Ascending aorta (tissue), 2 donors: ENCODE measurements at regions of chr15 and their contacts with region 1.

Region 1: GRCh38 chr15:33132722-33133345 is 61.7 kb downstream of the FMN1 start:
- DNase-seq: no peak
- H3K4me3 ChIP-seq: no peak overlapping the region
- H3K27ac ChIP-seq: no peak overlapping the region
- H3K4me1 ChIP-seq: no peaks in the 10 kb centered on the region
- H3K27me3 ChIP-seq: no peaks in the 10 kb centered on the region
- CTCF ChIP-seq: peak; percentile 33 to 60 (median 37)

Region 2: DNA sequence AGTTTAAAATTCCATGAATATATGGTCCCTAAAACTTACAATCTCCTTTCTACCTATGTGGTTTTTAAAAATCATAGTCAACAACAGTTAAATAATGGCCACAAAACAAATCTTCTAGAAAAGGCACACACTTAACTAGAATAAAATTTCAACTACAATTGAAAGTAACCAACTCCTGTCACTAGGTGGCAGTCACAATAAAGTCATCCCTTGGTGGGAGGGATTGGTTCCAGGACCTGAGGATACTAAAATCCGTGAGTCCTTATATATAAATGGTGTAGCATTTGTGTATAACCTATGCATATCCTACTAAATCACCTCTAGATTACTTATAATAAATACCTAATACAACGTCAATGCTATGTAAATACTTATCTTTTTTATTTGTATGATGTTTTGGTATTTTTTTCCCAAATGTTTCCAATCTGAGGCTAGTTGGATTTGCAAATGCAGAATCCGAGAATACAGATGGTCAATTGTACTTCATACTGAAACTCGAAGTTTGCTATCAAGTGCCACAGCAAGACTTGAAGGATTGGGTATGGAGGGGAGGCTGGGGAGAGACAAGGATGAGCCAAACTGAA is 110.9 kb before region 1 on chr15:
- intact Hi-C with region 1: loop called (anchors 5 kb)
- DNase-seq: no peak
- H3K4me3 ChIP-seq: no peak overlapping the region
- H3K27ac ChIP-seq: peak overlapping the region; percentile 31 to 42
- H3K4me1 ChIP-seq: peaks cover 0 to 3% of the 10 kb centered on the region in 2 donors
- H3K27me3 ChIP-seq: no peaks in the 10 kb centered on the region
- CTCF ChIP-seq: peak in 2 of 3 experiments; percentile 45 to 55

Region 3: GRCh38 chr15:33086507-33087121 is 46.2 kb before region 1 on chr15:
- intact Hi-C with region 1: loop called (anchors 2 kb)
- DNase-seq: no peak
- H3K4me3 ChIP-seq: no peak overlapping the region
- H3K27ac ChIP-seq: no peak overlapping the region
- H3K4me1 ChIP-seq: no peaks in the 10 kb centered on the region
- H3K27me3 ChIP-seq: no peaks in the 10 kb centered on the region
- CTCF ChIP-seq: peak in 2 of 3 experiments; percentile 29 to 53